ENCODE measurements at regions of chr5 and their contacts with region 1.

Region 1: DNA sequence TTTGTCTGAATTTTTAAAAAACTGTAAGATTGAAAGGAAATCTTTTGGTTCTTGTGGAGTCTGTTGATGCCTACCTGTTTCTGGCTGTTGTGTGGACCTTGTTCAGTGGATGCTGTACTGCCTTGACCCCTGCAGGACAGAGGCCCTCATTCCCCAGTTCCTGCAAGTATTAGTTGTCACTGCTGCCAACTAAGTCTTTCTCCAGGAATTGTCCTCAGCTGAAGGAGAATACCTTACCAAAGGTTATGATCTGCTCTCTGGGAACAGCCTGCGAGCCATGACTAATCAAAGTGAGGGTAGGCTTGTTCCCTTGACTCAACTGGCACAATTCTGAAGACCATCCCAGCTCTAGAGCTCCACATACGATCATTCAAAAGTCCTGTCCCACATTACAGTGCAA is 145.3 kb upstream of the FST start:
- DNase-seq: peak; percentile 50
- H3K4me3 ChIP-seq: no peak overlapping the region
- H3K27ac ChIP-seq: peak overlapping the region; percentile 100
- H3K4me1 ChIP-seq: peaks cover 87% of the 10 kb centered on the region
- H3K27me3 ChIP-seq: no peaks in the 10 kb centered on the region
- CTCF ChIP-seq: peak; percentile 19 to 40

Region 2: GRCh38 chr5:53170748-53171349 is 164.3 kb before region 1 on chr5:
- CTCF ChIA-PET with region 1: no interaction called
- dilution Hi-C with region 1: no loop called
- in situ Hi-C with region 1: no loop called
- intact Hi-C with region 1: loop called (anchors 1 kb)
- DNase-seq: peak; percentile 52
- H3K4me3 ChIP-seq: no peak overlapping the region
- H3K27ac ChIP-seq: peak overlapping the region; percentile 51
- H3K4me1 ChIP-seq: no peaks in the 10 kb centered on the region
- H3K27me3 ChIP-seq: no peaks in the 10 kb centered on the region
- CTCF ChIP-seq: peak; percentile 77 to 78

Region 3: DNA sequence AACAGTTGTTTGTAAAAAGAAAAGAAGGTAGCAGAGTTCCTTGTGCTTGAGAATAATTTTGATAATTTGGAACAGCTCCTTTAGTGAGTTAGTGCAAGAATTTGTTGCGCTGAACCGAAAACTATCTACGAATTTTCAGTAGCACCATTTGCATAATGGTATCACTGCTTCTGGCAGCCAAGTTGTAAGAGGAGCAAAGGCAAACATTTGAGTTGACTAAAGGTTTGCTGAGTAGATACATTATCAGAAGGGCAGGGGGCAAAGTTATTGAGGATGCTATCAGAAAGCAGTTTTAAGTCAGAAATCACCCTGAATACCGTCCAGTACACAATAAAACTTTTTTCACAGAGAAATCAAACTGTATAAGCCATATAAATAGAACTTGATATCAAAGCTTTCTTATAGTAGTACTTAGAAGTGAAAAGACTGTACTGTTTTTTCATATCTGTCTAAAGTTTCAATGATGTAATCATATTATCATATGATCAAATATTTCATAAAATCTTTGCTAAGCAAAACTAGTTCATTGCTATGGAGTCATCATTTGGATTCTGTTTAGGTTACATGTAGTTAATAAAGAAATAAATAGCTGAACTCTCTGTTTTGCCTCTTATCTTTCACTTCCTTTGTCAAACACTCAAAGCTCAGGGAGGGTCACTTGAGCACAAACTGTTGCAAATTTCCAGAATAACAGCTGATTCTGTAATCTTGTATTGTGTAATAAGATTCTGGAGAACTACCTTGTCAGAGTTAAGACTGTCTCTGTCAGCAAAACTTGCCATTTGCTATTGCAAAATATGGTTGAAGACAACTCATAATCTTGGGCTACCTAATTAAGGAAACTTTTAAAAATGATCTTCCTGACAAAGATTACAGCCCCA is 43.8 kb before region 1 on chr5:
- CTCF ChIA-PET with region 1: interaction called, 4 read pairs
- dilution Hi-C with region 1: loop called (anchors 5 kb)
- in situ Hi-C with region 1: no loop called
- intact Hi-C with region 1: loop called (anchors 1 kb)
- DNase-seq: peak; percentile 60
- H3K4me3 ChIP-seq: no peak overlapping the region
- H3K27ac ChIP-seq: peak overlapping the region; percentile 39
- H3K4me1 ChIP-seq: peaks cover 31% of the 10 kb centered on the region
- H3K27me3 ChIP-seq: no peaks in the 10 kb centered on the region
- CTCF ChIP-seq: no peak

Region 4: DNA sequence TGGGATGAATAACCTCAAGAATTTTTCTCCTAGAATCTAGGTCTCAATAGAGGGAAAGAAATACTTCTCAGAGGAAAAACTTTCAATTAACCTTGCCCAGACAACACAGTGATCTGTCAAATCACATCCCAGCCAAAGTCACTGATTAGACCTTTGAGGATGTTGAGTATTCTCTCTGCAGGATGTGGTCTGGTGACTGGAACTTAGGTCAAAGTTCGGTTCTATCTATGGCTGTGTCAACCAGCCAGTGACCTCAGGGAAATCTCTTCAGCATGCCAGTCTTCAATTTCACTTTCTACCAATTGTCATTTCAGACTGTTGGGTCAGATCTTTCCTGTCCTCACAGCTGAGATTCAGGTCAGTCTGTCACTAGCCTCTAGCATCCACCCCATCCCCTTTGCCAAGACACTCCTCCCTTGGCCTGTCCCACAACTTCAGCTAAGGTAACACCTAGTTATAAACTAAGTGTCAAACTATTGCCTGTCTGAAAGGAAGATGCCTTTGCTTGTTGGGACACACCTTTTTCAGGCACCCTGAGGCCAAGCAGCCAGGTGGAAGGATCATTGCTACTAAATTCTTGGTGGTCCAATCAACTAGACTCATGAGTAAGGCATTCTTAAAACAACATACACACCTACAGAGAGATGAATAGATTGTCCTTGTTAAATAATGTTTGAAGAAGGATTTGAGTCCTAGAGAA is 11.0 kb before region 1 on chr5:
- CTCF ChIA-PET with region 1: interaction called, 5 read pairs
- dilution Hi-C with region 1: no loop called
- in situ Hi-C with region 1: no loop called
- intact Hi-C with region 1: loop called (anchors 1 kb)
- DNase-seq: peak; percentile 99
- H3K4me3 ChIP-seq: no peak overlapping the region
- H3K27ac ChIP-seq: peak overlapping the region; percentile 99
- H3K4me1 ChIP-seq: peaks cover 78% of the 10 kb centered on the region
- H3K27me3 ChIP-seq: no peaks in the 10 kb centered on the region
- CTCF ChIP-seq: no peak

Region 5: GRCh38 chr5:53418844-53419646 is 83.9 kb after region 1 on chr5:
- CTCF ChIA-PET with region 1: no interaction called
- dilution Hi-C with region 1: no loop called
- in situ Hi-C with region 1: no loop called
- intact Hi-C with region 1: loop called (anchors 1 kb)
- DNase-seq: peak; percentile 96
- H3K4me3 ChIP-seq: no peak overlapping the region
- H3K27ac ChIP-seq: peak overlapping the region; percentile 100
- H3K4me1 ChIP-seq: peaks cover 47% of the 10 kb centered on the region
- H3K27me3 ChIP-seq: no peaks in the 10 kb centered on the region
- CTCF ChIP-seq: no peak

Region 6: GRCh38 chr5:53814819-53815218 is 479.7 kb after region 1 on chr5:
- CTCF ChIA-PET with region 1: no interaction called
- dilution Hi-C with region 1: no loop called
- in situ Hi-C with region 1: no loop called
- intact Hi-C with region 1: no loop called
- DNase-seq: no peak
- H3K4me3 ChIP-seq: no peak overlapping the region
- H3K27ac ChIP-seq: no peak overlapping the region
- H3K4me1 ChIP-seq: no peaks in the 10 kb centered on the region
- H3K27me3 ChIP-seq: peaks cover 4% of the 10 kb centered on the region
- CTCF ChIP-seq: no peak